ENCODE measurements at regions of chr4 and their contacts with region 1.

Region 1: GRCh38 chr4:18689308-18690115 is 668.0 kb upstream of the LCORL start:
- DNase-seq: no peak
- H3K4me3 ChIP-seq: no peak overlapping the region
- H3K27ac ChIP-seq: no peak overlapping the region
- H3K4me1 ChIP-seq: no peaks in the 10 kb centered on the region
- H3K27me3 ChIP-seq: no peaks in the 10 kb centered on the region
- CTCF ChIP-seq: peak in 2 of 3 experiments; percentile 53 to 80

Region 2: GRCh38 chr4:18840481-18840880 is 151.0 kb after region 1 on chr4:
- intact Hi-C with region 1: no loop called
- DNase-seq: no peak
- H3K4me3 ChIP-seq: no peak overlapping the region
- H3K27ac ChIP-seq: no peak overlapping the region
- H3K4me1 ChIP-seq: no peaks in the 10 kb centered on the region
- H3K27me3 ChIP-seq: no peaks in the 10 kb centered on the region
- CTCF ChIP-seq: no peak

Region 3: DNA sequence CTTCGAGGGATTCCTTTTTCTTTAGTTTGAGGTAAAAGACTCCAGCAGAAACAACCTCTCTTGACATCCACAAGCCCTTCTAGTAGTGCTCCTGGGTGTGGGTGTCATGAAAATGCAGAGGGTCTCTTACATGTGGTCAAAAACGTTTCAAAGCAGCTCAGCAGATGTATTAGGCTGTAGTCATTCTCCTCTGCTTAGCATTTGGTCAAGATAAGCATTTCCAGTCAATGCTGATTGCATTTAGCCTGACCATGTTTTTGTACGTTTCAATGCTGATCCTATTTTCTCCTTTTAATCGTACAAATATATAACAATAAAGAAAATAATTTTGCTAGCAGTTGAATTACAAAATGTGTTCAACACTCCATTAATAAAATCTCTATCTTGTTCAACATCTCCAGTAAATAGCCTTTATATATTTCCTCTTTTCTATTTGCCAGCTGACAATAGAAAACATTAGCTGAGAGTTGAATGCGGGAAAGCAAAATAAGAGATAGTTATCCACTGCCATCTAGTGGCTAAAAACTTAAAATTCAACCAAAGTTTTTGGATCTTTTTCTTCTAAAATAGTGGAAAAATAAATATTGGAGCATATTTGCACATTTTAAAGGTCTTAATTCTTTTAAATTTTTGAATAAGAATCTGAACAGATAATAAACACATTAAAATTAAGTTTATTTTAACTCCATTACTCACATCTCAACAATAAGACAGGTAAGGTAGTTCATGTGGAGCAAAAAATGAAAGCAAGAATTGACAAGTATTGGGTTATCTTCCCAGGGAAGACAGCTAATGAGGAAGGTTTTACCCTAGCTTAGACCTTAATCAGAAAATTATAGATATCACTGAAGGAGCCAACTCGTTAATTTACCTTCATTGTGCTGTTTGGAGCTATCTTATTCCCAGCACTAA is 1995.6 kb after region 1 on chr4:
- intact Hi-C with region 1: loop called (anchors 10 kb)
- DNase-seq: no peak
- H3K4me3 ChIP-seq: no peak overlapping the region
- H3K27ac ChIP-seq: no peak overlapping the region
- H3K4me1 ChIP-seq: no peaks in the 10 kb centered on the region
- H3K27me3 ChIP-seq: no peaks in the 10 kb centered on the region
- CTCF ChIP-seq: peak; percentile 33 to 66 (median 47)

Measured in ascending aorta (tissue), 2 donors.